ENCODE measurements at regions of chr5 and their contacts with region 1.

Region 1: GRCh38 chr5:141811287-141812155 is 66.7 kb downstream of the PCDH1 start:
- DNase-seq: no peak
- H3K4me3 ChIP-seq: no peak overlapping the region
- H3K27ac ChIP-seq: no peak overlapping the region
- H3K27me3 ChIP-seq: peaks cover 73% of the 10 kb centered on the region
- CTCF ChIP-seq: peak; percentile 65

Region 2: DNA sequence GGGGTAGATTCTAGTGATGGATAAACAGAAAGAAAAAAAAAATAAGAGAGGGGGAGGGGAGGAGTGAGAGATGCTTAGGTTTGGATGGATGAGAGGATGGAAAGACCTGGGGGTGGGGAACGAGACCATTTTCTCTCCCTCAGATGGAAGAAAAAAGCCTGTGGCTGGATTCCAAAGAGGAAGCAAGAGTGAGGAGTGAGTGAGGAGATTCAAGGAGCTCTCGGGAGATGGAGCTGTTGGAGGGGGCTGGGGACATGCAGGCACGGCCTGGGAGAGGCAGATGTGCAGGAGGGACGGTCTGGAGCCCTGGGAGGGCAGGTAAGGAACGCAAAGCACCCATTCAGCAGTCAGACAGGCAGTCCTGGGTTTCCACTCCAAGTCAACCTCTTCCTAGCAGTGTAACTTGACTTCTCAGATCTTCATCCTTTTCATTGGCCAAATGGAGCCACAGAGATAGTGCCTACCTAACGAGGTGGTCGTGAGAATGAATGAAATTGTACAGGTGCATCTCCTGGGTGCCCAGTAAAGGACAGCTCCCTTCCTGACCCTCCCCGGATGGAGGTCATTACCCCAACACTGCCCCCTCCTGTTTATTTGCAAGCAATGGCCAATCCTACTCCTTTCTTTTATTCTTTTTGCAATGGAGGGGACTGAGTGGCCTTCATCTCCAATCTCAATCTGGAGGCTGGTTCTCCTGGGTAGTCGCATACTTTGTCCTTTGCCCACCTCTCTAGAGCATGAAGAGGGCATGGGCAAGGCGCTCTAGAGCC is 14.5 kb after region 1 on chr5:
- CTCF ChIA-PET with region 1: interaction called, 15 read pairs
- POLR2A ChIA-PET with region 1: no interaction called
- DNase-seq: no peak
- H3K4me3 ChIP-seq: no peak overlapping the region
- H3K27ac ChIP-seq: no peak overlapping the region
- H3K27me3 ChIP-seq: peaks cover 32% of the 10 kb centered on the region
- CTCF ChIP-seq: peak; percentile 36

Region 3: GRCh38 chr5:141903261-141903660 is 91.7 kb after region 1 on chr5:
- CTCF ChIA-PET with region 1: no interaction called
- POLR2A ChIA-PET with region 1: no interaction called
- DNase-seq: no peak
- H3K4me3 ChIP-seq: no peak overlapping the region
- H3K27ac ChIP-seq: no peak overlapping the region
- H3K27me3 ChIP-seq: peaks cover 12% of the 10 kb centered on the region
- CTCF ChIP-seq: no peak

Measured in AG04450 (cell line).